PC-9 (cell line): ENCODE measurements at regions of chr14 and their contacts with region 1.

Region 1: GRCh38 chr14:75452900-75453747 is 25.3 kb downstream of the JDP2 start:
- DNase-seq: peak; percentile 100
- H3K4me3 ChIP-seq: peak overlapping the region; percentile 17; the same call in 1 of the 2 replicates
- H3K27ac ChIP-seq: peak overlapping the region; percentile 93
- H3K4me1 ChIP-seq: peaks cover 96% of the 10 kb centered on the region
- H3K27me3 ChIP-seq: no peaks in the 10 kb centered on the region
- CTCF ChIP-seq: peak; percentile 26; the same call in 1 of the 2 replicates

Region 2: GRCh38 chr14:74881431-74882361 is 571.4 kb before region 1 on chr14 and contains the start of gene DLST:
- CTCF ChIA-PET with region 1: interaction called, 5 read pairs
- POLR2A ChIA-PET with region 1: no interaction called
- intact Hi-C with region 1: loop called (anchors 10 kb)
- DNase-seq: peak; percentile 78 to 99
- H3K4me3 ChIP-seq: peak within 1 kb of the TSS; percentile 75
- H3K27ac ChIP-seq: peak within 1 kb of the TSS; percentile 17
- H3K4me1 ChIP-seq: peaks cover 49% of the 10 kb centered on the region
- H3K27me3 ChIP-seq: no peaks in the 10 kb centered on the region
- CTCF ChIP-seq: no peak
- total RNA-seq, gene DLST: 309 and 320 TPM in 2 replicates

Region 3: GRCh38 chr14:75258615-75259466 is 194.3 kb before region 1 on chr14:
- CTCF ChIA-PET with region 1: no interaction called
- POLR2A ChIA-PET with region 1: no interaction called
- intact Hi-C with region 1: loop called (anchors 5 kb)
- DNase-seq: peak; percentile 100
- H3K4me3 ChIP-seq: peak overlapping the region; percentile 56
- H3K27ac ChIP-seq: peak overlapping the region; percentile 83
- H3K4me1 ChIP-seq: peaks cover 63% of the 10 kb centered on the region
- H3K27me3 ChIP-seq: no peaks in the 10 kb centered on the region
- CTCF ChIP-seq: no peak

Region 4: DNA sequence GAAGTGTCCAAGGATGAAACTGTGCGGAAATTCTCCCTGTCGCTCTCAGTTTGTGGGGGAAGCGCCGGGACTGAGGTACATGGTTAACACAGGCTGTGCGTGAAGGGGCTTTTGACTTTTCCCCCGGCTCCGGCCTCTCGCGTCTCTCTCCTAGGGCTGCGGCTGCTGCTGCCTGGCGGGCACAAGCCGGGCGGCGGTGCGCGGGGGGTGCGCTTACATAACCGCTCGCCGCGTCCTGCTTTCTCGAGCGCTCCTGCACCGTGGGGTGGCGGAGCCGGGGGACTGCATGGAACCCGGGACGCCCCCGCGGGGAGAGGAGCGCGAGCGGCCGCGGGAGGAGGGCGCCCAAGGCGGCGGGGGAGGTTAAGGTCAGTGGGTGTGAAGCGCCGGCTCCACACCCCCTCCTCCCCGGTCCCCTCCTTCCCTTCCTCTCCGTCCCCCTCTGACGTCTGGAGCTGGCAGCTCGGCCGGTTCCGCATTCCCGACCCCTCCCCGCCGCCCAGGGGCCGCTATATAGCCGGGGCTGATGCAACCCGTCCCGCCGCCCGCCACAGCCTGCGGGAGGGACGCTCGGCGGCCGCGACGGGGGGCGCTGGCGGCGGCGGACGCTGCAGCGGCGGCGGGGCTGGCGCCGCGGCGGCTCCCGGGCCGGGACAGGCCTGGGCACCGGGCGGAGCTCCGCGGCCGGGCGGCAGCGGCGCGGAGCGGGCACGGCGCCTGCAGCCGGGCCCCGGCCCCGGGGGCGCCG is 25.5 kb before region 1 on chr14 and contains the start of gene JDP2:
- CTCF ChIA-PET with region 1: interaction called, 6 read pairs
- POLR2A ChIA-PET with region 1: interaction called, 10 read pairs
- intact Hi-C with region 1: loop called (anchors 1 kb)
- DNase-seq: peak; percentile 78 to 99
- H3K4me3 ChIP-seq: peak within 1 kb of the TSS; percentile 90
- H3K27ac ChIP-seq: no peak within 1 kb of the TSS
- H3K4me1 ChIP-seq: peaks cover 52% of the 10 kb centered on the region
- H3K27me3 ChIP-seq: no peaks in the 10 kb centered on the region
- CTCF ChIP-seq: no peak
- total RNA-seq, gene JDP2: 186 and 300 TPM in 2 replicates

Region 5: DNA sequence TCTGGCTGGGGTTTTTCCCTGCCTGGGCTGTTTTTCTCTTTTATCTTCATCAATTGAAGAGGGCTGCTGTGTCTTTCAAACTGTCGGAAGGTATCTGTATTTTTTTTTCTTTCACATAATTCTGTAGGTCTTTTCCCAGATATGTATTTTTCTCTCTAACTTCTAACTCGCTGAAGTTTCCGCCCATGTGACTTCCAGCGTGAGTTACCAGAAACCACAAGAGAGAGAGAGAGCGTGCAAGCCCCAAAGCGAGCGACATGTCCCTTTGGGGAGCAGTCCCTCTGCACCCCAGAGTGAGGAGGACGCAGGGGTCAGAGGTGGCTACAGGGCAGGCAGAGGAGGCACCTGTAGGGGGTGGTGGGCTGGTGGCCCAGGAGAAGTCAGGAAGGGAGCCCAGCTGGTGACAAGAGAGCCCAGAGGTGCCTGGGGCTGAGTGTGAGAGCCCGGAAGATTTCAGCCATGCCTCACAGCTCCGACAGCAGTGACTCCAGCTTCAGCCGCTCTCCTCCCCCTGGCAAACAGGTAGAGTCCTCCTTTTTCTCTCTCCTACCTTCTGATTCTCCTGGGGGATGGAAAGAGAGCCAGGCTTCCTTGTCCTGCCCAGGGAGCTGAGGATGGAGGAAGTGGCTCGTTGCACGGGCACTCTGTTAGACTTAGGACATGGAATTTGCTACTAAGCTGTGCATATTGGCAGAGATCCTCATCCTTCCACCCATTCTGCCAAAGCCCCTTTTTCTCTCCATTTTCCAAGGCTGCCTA is 69.3 kb after region 1 on chr14 and contains the start of gene BATF:
- CTCF ChIA-PET with region 1: no interaction called
- POLR2A ChIA-PET with region 1: no interaction called
- intact Hi-C with region 1: loop called (anchors 1 kb)
- DNase-seq: peak; percentile 69 to 74
- H3K4me3 ChIP-seq: peak within 1 kb of the TSS; percentile 68
- H3K27ac ChIP-seq: peak within 1 kb of the TSS; percentile 93
- H3K4me1 ChIP-seq: peaks cover 60% of the 10 kb centered on the region
- H3K27me3 ChIP-seq: no peaks in the 10 kb centered on the region
- CTCF ChIP-seq: no peak
- total RNA-seq, gene BATF: 55.7 and 79.0 TPM in 2 replicates

Region 6: GRCh38 chr14:75982266-75983018 is 529.3 kb after region 1 on chr14:
- CTCF ChIA-PET with region 1: interaction called, 4 read pairs
- POLR2A ChIA-PET with region 1: no interaction called
- intact Hi-C with region 1: loop called (anchors 2 kb)
- DNase-seq: peak; percentile 71 to 96
- H3K4me3 ChIP-seq: peak overlapping the region; percentile 85
- H3K27ac ChIP-seq: no peak overlapping the region
- H3K4me1 ChIP-seq: peaks cover 37% of the 10 kb centered on the region
- H3K27me3 ChIP-seq: no peaks in the 10 kb centered on the region
- CTCF ChIP-seq: peak; percentile 79